Psoas muscle (tissue), 8 donors: ENCODE measurements at regions of chr14 and their contacts with region 1.

Region 1: DNA sequence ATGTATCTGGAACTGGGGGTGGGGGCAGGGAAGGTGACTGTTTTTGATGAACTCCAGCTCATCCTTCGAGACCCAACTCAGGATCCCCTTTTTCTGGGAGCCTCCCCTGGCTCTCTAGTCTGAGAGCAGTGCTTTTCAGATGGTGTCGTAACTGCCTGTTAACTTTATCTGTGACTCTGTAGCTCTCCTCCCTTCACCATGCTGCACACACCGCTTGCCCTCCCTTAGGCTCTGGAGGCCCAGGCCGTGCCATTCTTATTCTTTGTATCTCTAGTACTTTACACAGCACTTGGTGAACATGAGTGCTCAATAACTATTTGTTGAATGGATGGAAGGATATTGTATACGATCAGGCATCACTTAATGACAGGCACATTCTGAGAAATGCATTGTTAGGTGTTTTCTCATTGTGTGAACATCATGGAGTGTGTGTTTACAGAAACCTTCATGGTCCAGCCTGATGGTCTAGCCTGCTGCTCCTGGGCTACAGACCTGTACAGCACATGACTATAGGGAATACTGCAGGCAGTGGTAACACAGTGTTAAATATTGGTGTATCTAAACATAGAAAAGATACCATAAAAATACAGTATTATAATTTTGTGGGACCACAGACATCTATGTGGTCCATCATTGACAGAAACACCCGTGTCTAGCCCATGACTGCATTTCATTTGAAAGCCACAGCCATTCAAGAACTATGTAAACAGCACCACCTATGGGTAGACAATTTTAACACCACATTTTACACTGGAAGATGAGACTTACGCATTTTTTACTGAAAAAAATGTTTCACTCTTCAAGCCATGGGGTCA is 91.8 kb downstream of the EML1 start:
- DNase-seq: no peak
- ATAC-seq: peak; percentile 78 to 90 (median 81)
- H3K4me3 ChIP-seq: no peak overlapping the region
- H3K27ac ChIP-seq: no peak overlapping the region
- H3K4me1 ChIP-seq: no peaks in the 10 kb centered on the region
- H3K27me3 ChIP-seq: no peaks in the 10 kb centered on the region
- CTCF ChIP-seq: peak; percentile 87

Region 2: GRCh38 chr14:99683619-99684355 is 201.3 kb before region 1 on chr14 and contains the start of gene CYP46A1:
- intact Hi-C with region 1: loop called (anchors 2 to 5 kb)
- DNase-seq: peak; percentile 100
- ATAC-seq: peak; percentile 96 to 98 (median 98)
- H3K4me3 ChIP-seq: peak within 1 kb of the TSS; percentile 95
- H3K27ac ChIP-seq: peak within 1 kb of the TSS; percentile 83
- H3K4me1 ChIP-seq: no peaks in the 10 kb centered on the region
- H3K27me3 ChIP-seq: no peaks in the 10 kb centered on the region
- CTCF ChIP-seq: no peak
- total RNA-seq, gene CYP46A1: 0.50 to 1.5 (median 0.83) TPM

Region 3: DNA sequence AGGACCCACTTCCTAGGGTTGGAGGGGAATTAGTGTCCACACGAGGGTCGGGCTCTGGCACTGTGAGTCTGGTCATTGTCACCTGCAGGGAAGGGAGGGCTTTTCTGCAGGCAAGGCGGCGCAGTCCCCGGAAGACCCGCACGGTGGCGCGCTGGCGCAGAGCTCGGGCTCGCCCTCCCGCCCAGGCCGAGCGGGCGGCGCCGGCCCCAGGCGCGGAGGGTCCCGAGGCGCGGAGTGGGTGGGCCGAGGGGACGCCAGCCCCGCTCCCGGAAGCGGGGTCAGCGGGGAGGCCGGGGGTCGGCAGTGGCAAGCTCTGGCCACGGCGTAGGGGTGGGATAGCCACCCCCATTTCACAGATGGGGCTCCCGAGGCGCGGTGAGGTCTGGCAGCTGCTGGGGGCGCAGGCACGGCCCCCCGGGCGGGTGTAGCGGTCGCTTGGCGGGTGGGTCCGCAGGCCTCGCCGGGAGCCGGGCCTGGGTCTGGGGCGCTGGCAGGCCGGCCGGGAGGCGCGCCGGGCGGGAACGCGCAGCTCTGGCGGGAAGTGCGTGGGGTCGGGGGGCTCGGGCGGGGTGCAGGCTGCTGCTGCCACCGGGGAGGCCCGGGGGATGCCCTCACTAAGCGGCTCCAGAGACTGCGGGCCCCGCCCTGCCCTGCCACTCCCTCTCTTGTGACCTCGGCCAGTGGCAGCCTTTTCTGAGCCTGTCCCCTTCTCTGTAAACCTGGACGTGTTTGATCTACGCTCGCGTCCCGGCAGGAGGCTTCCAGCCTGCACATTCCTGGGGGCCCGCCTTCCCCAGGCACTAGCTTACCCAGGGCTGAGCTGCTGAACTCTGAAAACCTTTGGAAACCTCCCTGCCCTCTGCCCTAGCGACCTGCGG is 154.8 kb before region 1 on chr14:
- intact Hi-C with region 1: loop called (anchors 1 kb)
- DNase-seq: peak; percentile 72 to 84
- ATAC-seq: peak; percentile 76 to 84 (median 82)
- H3K4me3 ChIP-seq: peak overlapping the region; percentile 69
- H3K27ac ChIP-seq: no peak overlapping the region
- H3K4me1 ChIP-seq: peaks cover 23% of the 10 kb centered on the region
- H3K27me3 ChIP-seq: no peaks in the 10 kb centered on the region
- CTCF ChIP-seq: peak; percentile 90

Region 4: GRCh38 chr14:99809861-99810260 is 75.2 kb before region 1 on chr14:
- intact Hi-C with region 1: loop called in 1 of 2 experiments (anchors 5 kb)
- DNase-seq: peak; percentile 51 to 75
- ATAC-seq: peak; percentile 53 to 67 (median 60)
- H3K4me3 ChIP-seq: no peak overlapping the region
- H3K27ac ChIP-seq: peak overlapping the region; percentile 61
- H3K4me1 ChIP-seq: peaks cover 20% of the 10 kb centered on the region
- H3K27me3 ChIP-seq: no peaks in the 10 kb centered on the region
- CTCF ChIP-seq: no peak